ENCODE measurements at regions of chr1 and their contacts with region 1.

Region 1: GRCh38 chr1:117331206-117331605 is 36.0 kb upstream of the MAN1A2 start:
- DNase-seq: no peak
- ATAC-seq: no peak
- H3K4me3 ChIP-seq: no peak overlapping the region
- H3K27ac ChIP-seq: no peak overlapping the region
- H3K4me1 ChIP-seq: no peaks in the 10 kb centered on the region
- H3K27me3 ChIP-seq: no peaks in the 10 kb centered on the region
- CTCF ChIP-seq: no peak

Region 2: GRCh38 chr1:117312225-117313138 is 18.7 kb before region 1 on chr1:
- intact Hi-C with region 1: loop called in 1 of 2 experiments (anchors 2 kb)
- DNase-seq: no peak
- ATAC-seq: no peak
- H3K4me3 ChIP-seq: no peak overlapping the region
- H3K27ac ChIP-seq: no peak overlapping the region
- H3K4me1 ChIP-seq: no peaks in the 10 kb centered on the region
- H3K27me3 ChIP-seq: no peaks in the 10 kb centered on the region
- CTCF ChIP-seq: no peak

Measured in psoas muscle (tissue), 8 donors.